CD8-positive, alpha-beta T cell (primary cell): ENCODE measurements at regions of chr6 and their contacts with region 1.

Region 1: GRCh38 chr6:53492860-53493634 is 51.9 kb downstream of the GCLC start:
- DNase-seq: peak in 2 of 9 experiments; percentile 59 to 67
- ATAC-seq: peak; percentile 40
- H3K4me3 ChIP-seq: no peak overlapping the region
- H3K4me3 Mint-ChIP-seq: no peak overlapping the region
- H3K27ac ChIP-seq: no peak overlapping the region
- H3K27ac Mint-ChIP-seq: no peak overlapping the region
- H3K4me1 ChIP-seq: no peaks in the 10 kb centered on the region
- H3K4me1 Mint-ChIP-seq: no peaks in the 10 kb centered on the region
- H3K27me3 ChIP-seq: no peaks in the 10 kb centered on the region
- H3K27me3 Mint-ChIP-seq: peaks cover 8% of the 10 kb centered on the region
- CTCF ChIP-seq: peak; percentile 93

Region 2: DNA sequence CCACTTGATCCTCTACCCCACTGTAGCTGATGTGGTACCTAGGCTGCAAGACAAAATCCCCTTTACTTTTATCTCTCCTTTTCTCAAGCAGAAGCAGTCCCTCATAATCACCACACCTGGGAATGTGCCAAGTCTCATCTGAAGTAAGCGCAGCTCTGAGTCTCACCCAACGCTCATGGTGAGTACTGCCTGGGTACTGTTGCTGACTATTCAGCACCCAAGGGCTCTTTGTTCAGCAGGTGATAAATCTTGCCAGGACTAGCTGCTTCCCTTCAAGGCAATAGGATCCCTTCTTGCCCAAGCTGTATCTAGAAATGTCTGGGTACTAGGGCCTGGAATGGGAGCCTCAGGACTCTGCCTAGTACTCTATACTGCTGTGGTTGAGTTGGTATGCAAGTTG is 19.0 kb before region 1 on chr6:
- CTCF ChIA-PET with region 1: no interaction called
- POLR2A ChIA-PET with region 1: no interaction called
- intact Hi-C with region 1: no loop called
- DNase-seq: no peak
- ATAC-seq: no peak
- H3K4me3 ChIP-seq: no peak overlapping the region
- H3K4me3 Mint-ChIP-seq: no peak overlapping the region
- H3K27ac ChIP-seq: no peak overlapping the region
- H3K27ac Mint-ChIP-seq: no peak overlapping the region
- H3K4me1 ChIP-seq: no peaks in the 10 kb centered on the region
- H3K4me1 Mint-ChIP-seq: no peaks in the 10 kb centered on the region
- H3K27me3 ChIP-seq: no peaks in the 10 kb centered on the region
- H3K27me3 Mint-ChIP-seq: peaks cover under 1% of the 10 kb centered on the region
- CTCF ChIP-seq: no peak

Region 3: DNA sequence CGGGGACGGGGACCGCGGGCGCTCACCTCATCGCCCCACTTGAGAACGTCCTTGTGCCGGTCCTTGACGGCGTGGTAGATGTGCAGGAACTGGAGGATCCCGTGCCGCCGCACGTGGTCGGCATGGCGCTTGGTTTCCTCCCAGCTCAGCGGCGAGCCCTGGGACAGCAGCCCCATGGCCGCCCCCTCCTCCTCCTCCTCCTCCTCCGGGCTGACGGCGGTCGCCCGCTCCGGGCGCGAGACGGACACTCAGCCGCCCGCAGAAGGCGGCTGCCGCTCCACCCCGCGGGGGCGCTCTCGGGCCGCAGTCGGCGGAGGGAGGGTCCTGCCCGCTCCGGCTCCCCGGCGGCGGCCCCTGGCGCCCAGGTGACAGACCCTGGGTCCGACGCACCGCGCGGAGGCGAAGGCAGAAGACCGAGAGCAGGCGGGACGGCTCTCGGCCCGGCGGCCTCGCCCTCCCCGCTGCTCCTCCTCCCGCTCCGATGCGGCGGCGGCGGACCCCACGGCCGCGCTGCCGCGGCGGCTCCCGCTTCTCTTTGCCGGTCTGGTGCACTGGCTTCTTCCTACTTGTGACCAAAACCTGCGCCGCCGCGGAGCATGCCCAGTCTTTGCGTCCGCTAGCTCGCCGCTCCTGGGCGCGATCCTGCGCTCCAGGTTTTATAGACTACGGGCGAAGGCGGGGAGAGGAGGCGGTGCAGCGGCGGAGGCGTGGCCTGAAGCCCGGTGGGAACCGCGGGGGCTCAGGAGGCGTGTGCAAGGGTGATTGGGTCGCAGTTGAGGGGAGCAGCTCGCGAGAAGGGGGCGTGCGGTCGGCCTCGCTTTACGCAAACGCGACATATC is 51.6 kb after region 1 on chr6 and contains the start of gene GCLC:
- CTCF ChIA-PET with region 1: no interaction called
- POLR2A ChIA-PET with region 1: no interaction called
- intact Hi-C with region 1: loop called (anchors 2 to 5 kb)
- DNase-seq: peak; percentile 75 to 95 (median 87)
- ATAC-seq: peak; percentile 67
- H3K4me3 ChIP-seq: peak within 1 kb of the TSS; percentile 69 to 79
- H3K4me3 Mint-ChIP-seq: peak within 1 kb of the TSS; percentile 99
- H3K27ac ChIP-seq: peak within 1 kb of the TSS; percentile 48 to 62
- H3K27ac Mint-ChIP-seq: peak within 1 kb of the TSS; percentile 89
- H3K4me1 ChIP-seq: peaks cover 39% of the 10 kb centered on the region
- H3K4me1 Mint-ChIP-seq: peaks cover 68% of the 10 kb centered on the region
- H3K27me3 ChIP-seq: no peaks in the 10 kb centered on the region
- H3K27me3 Mint-ChIP-seq: no peaks in the 10 kb centered on the region
- CTCF ChIP-seq: peak; percentile 80
- total RNA-seq, gene GCLC: 13.1 to 13.6 TPM

Region 4: DNA sequence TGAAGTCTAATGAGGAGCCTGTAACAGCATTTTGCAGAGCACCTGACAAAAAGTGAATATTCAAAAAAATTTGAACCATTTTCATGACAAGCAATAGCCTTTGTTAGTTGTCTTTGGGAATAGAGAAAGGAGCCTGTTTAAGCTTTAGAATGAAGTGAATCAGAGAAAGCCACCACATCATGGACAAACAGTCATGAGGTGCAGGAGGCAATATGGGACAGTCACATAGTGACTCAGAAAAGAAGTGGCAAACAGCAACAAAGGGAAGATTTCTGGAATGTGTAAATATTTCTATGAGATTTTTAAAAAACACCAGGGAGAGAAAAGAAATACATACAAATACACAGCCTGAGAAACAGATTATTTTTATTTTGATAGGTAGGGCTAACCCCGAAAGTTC is 165.9 kb after region 1 on chr6:
- CTCF ChIA-PET with region 1: interaction called, 11 read pairs
- POLR2A ChIA-PET with region 1: no interaction called
- intact Hi-C with region 1: no loop called
- DNase-seq: no peak
- ATAC-seq: no peak
- H3K4me3 ChIP-seq: no peak overlapping the region
- H3K4me3 Mint-ChIP-seq: no peak overlapping the region
- H3K27ac ChIP-seq: no peak overlapping the region
- H3K27ac Mint-ChIP-seq: no peak overlapping the region
- H3K4me1 ChIP-seq: no peaks in the 10 kb centered on the region
- H3K4me1 Mint-ChIP-seq: no peaks in the 10 kb centered on the region
- H3K27me3 ChIP-seq: no peaks in the 10 kb centered on the region
- H3K27me3 Mint-ChIP-seq: peaks cover 7% of the 10 kb centered on the region
- CTCF ChIP-seq: no peak

Region 5: DNA sequence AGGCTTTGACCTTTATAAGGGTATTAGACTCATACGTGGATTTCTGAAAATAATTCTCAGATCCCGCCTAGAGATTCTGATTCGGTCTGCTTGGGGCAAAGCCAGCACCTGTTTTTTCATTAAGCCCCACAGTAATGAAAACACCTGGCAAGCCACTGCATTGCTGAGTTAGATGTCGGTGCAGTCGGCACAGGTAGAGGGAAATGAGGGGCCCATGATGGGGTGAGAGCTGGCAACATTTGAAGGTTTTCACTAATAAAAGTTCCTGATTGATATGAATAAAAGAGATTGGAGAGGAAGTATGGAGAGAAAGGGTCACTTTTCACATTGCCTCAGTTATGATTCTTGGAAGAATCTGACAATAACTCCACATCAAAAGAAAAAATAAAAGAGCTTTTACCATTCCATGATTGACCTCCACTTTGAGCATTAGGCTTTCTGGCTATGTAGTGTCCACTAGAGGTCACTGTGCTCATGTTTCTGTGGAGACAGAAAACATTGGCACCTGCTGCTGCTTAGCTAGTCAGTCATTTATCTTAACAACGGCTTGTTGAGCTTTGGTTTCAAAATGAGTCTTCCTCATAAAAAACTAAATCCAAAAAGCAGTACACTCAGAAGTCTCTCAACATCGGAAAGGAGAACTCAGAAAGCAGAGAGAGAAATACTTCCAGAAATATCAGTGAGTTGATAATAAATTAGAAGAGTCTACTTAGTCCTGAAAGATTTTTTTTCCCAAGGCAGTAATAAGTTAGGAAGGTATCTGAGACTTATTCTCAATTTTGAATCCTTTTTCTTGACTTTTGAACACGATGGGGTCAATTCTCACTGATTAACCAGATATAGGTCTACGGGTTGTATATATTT is 225.8 kb after region 1 on chr6:
- CTCF ChIA-PET with region 1: interaction called, 253 read pairs
- POLR2A ChIA-PET with region 1: no interaction called
- intact Hi-C with region 1: no loop called
- DNase-seq: peak in 5 of 9 experiments; percentile 18 to 70 (median 20)
- ATAC-seq: peak; percentile 56
- H3K4me3 ChIP-seq: no peak overlapping the region
- H3K4me3 Mint-ChIP-seq: no peak overlapping the region
- H3K27ac ChIP-seq: no peak overlapping the region
- H3K27ac Mint-ChIP-seq: no peak overlapping the region
- H3K4me1 ChIP-seq: no peaks in the 10 kb centered on the region
- H3K4me1 Mint-ChIP-seq: peaks cover 2% of the 10 kb centered on the region
- H3K27me3 ChIP-seq: no peaks in the 10 kb centered on the region
- H3K27me3 Mint-ChIP-seq: peaks cover 9% of the 10 kb centered on the region
- CTCF ChIP-seq: peak; percentile 73